HepG2 (cell line): ENCODE measurements at regions of chr12 and their contacts with region 1.

Region 1: GRCh38 chr12:95796225-95796981 is 5.8 kb upstream of the NTN4 start:
- DNase-seq: peak; percentile 81
- ATAC-seq: peak; percentile 90
- H3K4me3 ChIP-seq: no peak overlapping the region
- H3K27ac ChIP-seq: no peak overlapping the region
- H3K4me1 ChIP-seq: peaks cover 69% of the 10 kb centered on the region
- H3K27me3 ChIP-seq: no peaks in the 10 kb centered on the region
- CTCF ChIP-seq: no peak
- EP300 ChIP-seq: peak in 1 of 2 experiments; percentile 69; a peak in 2 of 4 replicates
- POLR2A ChIP-seq: no peak
- RAD21 ChIP-seq: no peak

Region 2: DNA sequence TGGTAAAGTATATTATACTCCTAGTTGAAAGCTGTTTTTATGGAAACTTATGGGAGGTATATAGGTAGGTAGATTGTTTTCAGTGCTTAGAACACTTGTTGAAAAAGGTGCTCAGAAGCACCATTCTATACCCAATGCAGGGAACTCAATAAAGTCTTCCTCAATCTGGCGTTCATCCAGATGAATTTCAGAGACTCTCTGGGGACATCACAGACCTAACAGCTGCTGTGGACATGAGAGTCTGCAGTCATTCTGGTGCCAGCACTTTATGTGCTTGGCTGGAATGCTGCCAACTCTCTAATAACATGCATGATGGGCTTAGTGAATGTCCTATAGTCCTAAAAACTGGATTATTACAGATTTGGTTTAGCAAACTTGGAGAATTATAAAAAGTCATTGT is 121.8 kb before region 1 on chr12:
- CTCF ChIA-PET with region 1: no interaction called
- POLR2A ChIA-PET with region 1: no interaction called
- in situ Hi-C with region 1: no loop called
- intact Hi-C with region 1: no loop called
- DNase-seq: peak; percentile 15
- ATAC-seq: no peak
- H3K4me3 ChIP-seq: no peak overlapping the region
- H3K27ac ChIP-seq: no peak overlapping the region
- H3K4me1 ChIP-seq: no peaks in the 10 kb centered on the region; the same call in 1 of the 2 replicates
- H3K27me3 ChIP-seq: no peaks in the 10 kb centered on the region
- CTCF ChIP-seq: no peak
- EP300 ChIP-seq: no peak
- POLR2A ChIP-seq: no peak
- RAD21 ChIP-seq: no peak

Region 3: DNA sequence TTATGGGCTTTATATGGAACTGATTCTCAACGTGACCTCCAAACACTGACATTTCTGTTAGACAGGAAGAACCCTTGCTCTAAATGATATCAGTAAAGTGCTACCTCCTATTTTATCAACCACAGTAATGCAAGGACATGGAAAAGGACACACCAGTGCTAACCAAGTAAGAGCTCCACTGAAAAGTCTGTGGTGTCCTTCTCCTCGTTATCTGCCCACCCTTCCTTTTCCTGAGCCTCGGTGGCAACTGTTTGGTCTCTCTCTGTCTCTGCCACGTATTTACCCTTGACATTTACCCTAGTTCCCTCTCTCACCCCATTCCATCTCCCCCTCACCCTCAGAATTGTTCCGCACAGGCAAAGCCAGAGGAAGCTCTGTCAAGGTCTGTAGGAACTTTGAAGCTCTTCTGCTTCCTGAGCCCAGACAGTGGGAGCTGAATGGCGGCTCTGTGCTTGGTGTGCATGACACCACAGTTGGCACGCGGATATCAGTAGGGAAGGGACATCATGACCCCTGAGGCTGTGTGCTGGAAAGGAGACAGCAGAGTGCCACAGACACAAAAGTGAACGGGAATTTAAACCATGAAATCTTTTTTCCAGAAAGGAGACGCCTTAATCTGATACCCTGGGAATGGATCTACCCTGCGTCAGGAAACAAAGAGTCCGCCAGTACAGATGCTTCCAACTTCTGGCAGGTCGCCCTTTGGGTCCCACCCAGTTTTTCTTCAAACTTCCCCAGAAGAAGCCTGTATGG is 56.7 kb before region 1 on chr12:
- CTCF ChIA-PET with region 1: no interaction called
- POLR2A ChIA-PET with region 1: no interaction called
- in situ Hi-C with region 1: no loop called
- intact Hi-C with region 1: loop called (anchors 2 kb)
- DNase-seq: no peak
- ATAC-seq: no peak
- H3K4me3 ChIP-seq: no peak overlapping the region
- H3K27ac ChIP-seq: no peak overlapping the region
- H3K4me1 ChIP-seq: peaks cover 57% of the 10 kb centered on the region
- H3K27me3 ChIP-seq: no peaks in the 10 kb centered on the region
- CTCF ChIP-seq: no peak
- EP300 ChIP-seq: no peak
- POLR2A ChIP-seq: no peak
- RAD21 ChIP-seq: no peak

Region 4: DNA sequence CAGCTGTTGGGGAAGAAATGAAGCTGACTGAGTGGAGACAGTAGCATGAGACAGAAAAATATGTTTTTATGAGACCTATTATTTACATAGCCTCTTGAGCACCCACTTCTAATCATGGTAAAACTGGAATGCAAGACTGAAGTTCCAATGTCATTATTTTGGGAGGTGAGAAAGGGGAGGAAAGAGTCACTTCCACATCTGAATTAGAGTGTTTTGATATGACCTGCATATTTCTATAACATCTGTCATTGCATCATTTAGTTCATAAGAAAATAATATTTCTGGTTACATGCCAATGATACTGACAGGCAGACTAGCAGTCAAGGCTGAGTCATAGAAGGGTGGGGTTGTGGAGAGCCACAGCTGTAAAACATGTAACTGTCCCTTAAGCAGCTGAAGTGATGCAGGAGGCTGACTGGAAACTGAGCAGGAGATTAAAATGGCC is 32.6 kb before region 1 on chr12:
- CTCF ChIA-PET with region 1: no interaction called
- POLR2A ChIA-PET with region 1: interaction called, 3 read pairs
- in situ Hi-C with region 1: no loop called
- intact Hi-C with region 1: loop called (anchors 5 kb)
- DNase-seq: peak; percentile 48
- ATAC-seq: no peak; the same call in 2 of the 3 replicates
- H3K4me3 ChIP-seq: no peak overlapping the region
- H3K27ac ChIP-seq: peak overlapping the region; percentile 78
- H3K4me1 ChIP-seq: peaks cover 77% of the 10 kb centered on the region
- H3K27me3 ChIP-seq: no peaks in the 10 kb centered on the region
- CTCF ChIP-seq: no peak
- EP300 ChIP-seq: no peak
- POLR2A ChIP-seq: no peak
- RAD21 ChIP-seq: no peak